ENCODE measurements at regions of chr4 and their contacts with region 1.

Region 1: GRCh38 chr4:25131926-25132325 is 28.3 kb downstream of the SEPSECS start:
- DNase-seq: no peak
- ATAC-seq: no peak
- H3K4me3 Mint-ChIP-seq: no peak overlapping the region
- H3K27ac Mint-ChIP-seq: no peak overlapping the region
- H3K4me1 Mint-ChIP-seq: peaks cover 7% of the 10 kb centered on the region
- H3K27me3 Mint-ChIP-seq: no peaks in the 10 kb centered on the region

Region 2: GRCh38 chr4:24433515-24434214 is 698.3 kb before region 1 on chr4:
- CTCF ChIA-PET with region 1: no interaction called
- POLR2A ChIA-PET with region 1: no interaction called
- intact Hi-C with region 1: no loop called
- DNase-seq: no peak
- ATAC-seq: no peak
- H3K4me3 Mint-ChIP-seq: no peak overlapping the region
- H3K27ac Mint-ChIP-seq: no peak overlapping the region
- H3K4me1 Mint-ChIP-seq: no peaks in the 10 kb centered on the region
- H3K27me3 Mint-ChIP-seq: peaks cover 15% of the 10 kb centered on the region

Region 3: GRCh38 chr4:24598026-24598425 is 533.9 kb before region 1 on chr4:
- CTCF ChIA-PET with region 1: interaction called, 3 read pairs
- POLR2A ChIA-PET with region 1: interaction called, 11 read pairs
- intact Hi-C with region 1: no loop called
- DNase-seq: no peak
- ATAC-seq: no peak
- H3K4me3 Mint-ChIP-seq: no peak overlapping the region
- H3K27ac Mint-ChIP-seq: no peak overlapping the region
- H3K4me1 Mint-ChIP-seq: peaks cover 2% of the 10 kb centered on the region
- H3K27me3 Mint-ChIP-seq: peaks cover 3% of the 10 kb centered on the region

Region 4: DNA sequence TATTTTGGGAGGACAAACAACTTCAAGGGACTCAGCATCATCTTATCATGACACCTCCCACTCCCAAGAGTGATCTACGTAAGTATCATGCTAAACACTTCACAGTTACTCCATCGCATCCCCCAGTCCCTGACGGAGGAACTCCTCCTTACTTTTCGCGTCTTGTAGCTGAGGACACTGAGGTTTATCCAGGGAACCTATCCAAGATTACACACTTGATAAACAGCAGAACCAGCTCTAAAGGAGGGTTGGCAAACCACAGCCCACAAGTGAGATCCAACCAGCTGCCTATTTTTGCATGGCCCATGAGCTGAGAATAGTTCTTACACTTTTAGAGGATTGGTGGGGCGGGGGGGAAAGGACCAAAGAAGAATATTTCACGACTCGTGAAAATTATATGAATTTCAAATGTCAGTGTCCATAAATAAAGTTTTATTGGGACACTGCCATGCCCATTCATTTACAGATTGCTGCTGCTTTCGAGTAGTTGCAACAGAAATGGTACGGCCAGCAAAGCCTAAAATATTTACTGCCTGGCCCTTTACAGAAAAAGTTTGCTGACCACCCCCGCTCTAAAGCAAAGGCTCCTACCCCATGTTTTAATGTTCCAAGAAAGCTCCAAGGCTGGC is 19.4 kb before region 1 on chr4:
- CTCF ChIA-PET with region 1: no interaction called
- POLR2A ChIA-PET with region 1: no interaction called
- intact Hi-C with region 1: no loop called
- DNase-seq: no peak
- ATAC-seq: no peak
- H3K4me3 Mint-ChIP-seq: no peak overlapping the region
- H3K27ac Mint-ChIP-seq: no peak overlapping the region
- H3K4me1 Mint-ChIP-seq: no peaks in the 10 kb centered on the region
- H3K27me3 Mint-ChIP-seq: no peaks in the 10 kb centered on the region

Region 5: GRCh38 chr4:25144870-25145481 is 13.1 kb after region 1 on chr4:
- CTCF ChIA-PET with region 1: interaction called, 13 read pairs
- POLR2A ChIA-PET with region 1: no interaction called
- intact Hi-C with region 1: no loop called
- DNase-seq: no peak
- ATAC-seq: no peak
- H3K4me3 Mint-ChIP-seq: no peak overlapping the region
- H3K27ac Mint-ChIP-seq: no peak overlapping the region
- H3K4me1 Mint-ChIP-seq: no peaks in the 10 kb centered on the region
- H3K27me3 Mint-ChIP-seq: no peaks in the 10 kb centered on the region